ENCODE measurements at regions of chr6 and their contacts with region 1.

Region 1: GRCh38 chr6:52724406-52725121 is 38.7 kb downstream of the GSTA2 start:
- DNase-seq: peak; percentile 79
- ATAC-seq: peak; percentile 89
- H3K4me3 ChIP-seq: 0 out of 6 replicates have a peak overlapping the region, but pooled peaks of 1 of the 3 experiments have one; percentile 49
- H3K27ac ChIP-seq: peak overlapping the region; percentile 94
- H3K4me1 ChIP-seq: peaks cover 62% of the 10 kb centered on the region
- H3K27me3 ChIP-seq: no peaks in the 10 kb centered on the region
- CTCF ChIP-seq: peak; percentile 95
- EP300 ChIP-seq: no peak
- POLR2A ChIP-seq: no peak
- RAD21 ChIP-seq: peak; percentile 97

Region 2: GRCh38 chr6:52670502-52671409 is 53.8 kb before region 1 on chr6 and contains the start of gene TMEM14A:
- CTCF ChIA-PET with region 1: no interaction called
- POLR2A ChIA-PET with region 1: no interaction called
- in situ Hi-C with region 1: no loop called
- intact Hi-C with region 1: loop called (anchors 2 kb)
- DNase-seq: peak; percentile 95
- ATAC-seq: peak; percentile 98
- H3K4me3 ChIP-seq: peak within 1 kb of the TSS; percentile 60 to 80 (median 69)
- H3K27ac ChIP-seq: peak within 1 kb of the TSS; percentile 60
- H3K4me1 ChIP-seq: peaks cover 55% of the 10 kb centered on the region
- H3K27me3 ChIP-seq: no peaks in the 10 kb centered on the region; a peak in 1 of 5 replicates
- CTCF ChIP-seq: peak; percentile 50
- EP300 ChIP-seq: peak in 1 of 2 experiments; percentile 59; a peak in 2 of 4 replicates
- POLR2A ChIP-seq: peak; percentile 93 to 96
- RAD21 ChIP-seq: peak; percentile 74
- total RNA-seq, gene TMEM14A: 73.7 and 78.0 TPM in 2 replicates

Region 3: GRCh38 chr6:52745764-52746201 is 21.2 kb after region 1 on chr6:
- CTCF ChIA-PET with region 1: no interaction called
- POLR2A ChIA-PET with region 1: interaction called, 5 read pairs
- in situ Hi-C with region 1: no loop called
- intact Hi-C with region 1: loop called (anchors 1 kb)
- DNase-seq: peak; percentile 78
- ATAC-seq: peak; percentile 69
- H3K4me3 ChIP-seq: no peak overlapping the region
- H3K27ac ChIP-seq: peak overlapping the region; percentile 68
- H3K4me1 ChIP-seq: peaks cover 64% of the 10 kb centered on the region
- H3K27me3 ChIP-seq: no peaks in the 10 kb centered on the region
- CTCF ChIP-seq: no peak
- EP300 ChIP-seq: peak; percentile 10 to 87; a peak in 3 of 4 replicates
- POLR2A ChIP-seq: no peak
- RAD21 ChIP-seq: no peak

Region 4: DNA sequence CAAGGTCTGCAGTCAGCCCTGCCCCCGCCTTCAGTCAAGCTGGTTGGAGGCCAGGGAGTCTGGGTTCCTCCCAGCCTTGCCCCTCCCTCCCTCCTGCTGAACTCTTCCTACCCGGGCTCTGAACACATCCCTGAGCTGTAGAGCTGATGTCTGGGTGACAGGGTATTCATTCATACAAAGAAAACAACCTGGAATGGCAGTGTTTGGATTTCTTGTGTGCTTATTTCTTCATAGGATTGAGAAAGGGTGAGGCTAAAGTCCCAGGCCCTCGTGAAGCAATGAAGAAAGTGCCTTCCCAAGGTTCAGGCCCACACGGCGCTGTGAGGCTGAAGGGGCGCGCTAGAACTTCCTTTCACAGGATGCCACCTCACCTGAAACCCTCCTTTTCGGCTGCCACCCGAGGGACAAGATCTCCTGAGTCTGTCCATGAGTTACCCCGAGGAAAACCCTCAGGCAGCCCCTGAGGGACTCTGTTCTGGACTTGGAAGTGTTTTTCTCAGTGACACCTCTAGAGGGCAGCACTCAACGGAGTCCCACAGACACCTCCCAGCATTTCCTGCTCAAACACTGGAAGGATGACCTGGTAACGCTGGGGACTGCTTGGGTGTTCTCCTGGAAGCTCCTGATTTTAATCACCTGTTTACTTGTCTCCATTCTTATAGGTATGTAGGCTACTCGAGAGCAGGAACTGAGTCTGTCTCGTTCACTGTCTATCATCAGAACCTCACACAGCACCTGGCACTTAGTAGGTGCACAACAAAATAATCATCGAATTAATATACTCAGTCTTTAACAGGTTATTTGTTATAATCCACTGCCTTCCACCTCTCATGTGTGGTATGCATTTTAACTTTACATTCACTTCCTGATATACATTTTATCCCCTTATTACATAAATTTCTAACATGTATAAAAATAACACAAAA is 90.9 kb after region 1 on chr6:
- CTCF ChIA-PET with region 1: interaction called, 22 read pairs
- POLR2A ChIA-PET with region 1: interaction called, 16 read pairs
- in situ Hi-C with region 1: no loop called
- intact Hi-C with region 1: loop called (anchors 1 kb)
- DNase-seq: peak; percentile 91
- ATAC-seq: peak; percentile 92
- H3K4me3 ChIP-seq: peak overlapping the region; percentile 34 to 69 (median 41); a peak in 4 of 6 replicates
- H3K27ac ChIP-seq: peak overlapping the region; percentile 89
- H3K4me1 ChIP-seq: peaks cover 34% of the 10 kb centered on the region
- H3K27me3 ChIP-seq: no peaks in the 10 kb centered on the region
- CTCF ChIP-seq: peak; percentile 88
- EP300 ChIP-seq: peak in 1 of 2 experiments; percentile 90; a peak in 3 of 4 replicates
- POLR2A ChIP-seq: peak in 1 of 2 experiments; percentile 69; a peak in 2 of 4 replicates
- RAD21 ChIP-seq: peak; percentile 78

Region 5: GRCh38 chr6:52910091-52910490 is 185.5 kb after region 1 on chr6:
- CTCF ChIA-PET with region 1: no interaction called
- POLR2A ChIA-PET with region 1: no interaction called
- in situ Hi-C with region 1: no loop called
- intact Hi-C with region 1: loop called (anchors 10 kb)
- DNase-seq: no peak
- ATAC-seq: no peak
- H3K4me3 ChIP-seq: no peak overlapping the region
- H3K27ac ChIP-seq: no peak overlapping the region
- H3K4me1 ChIP-seq: peaks cover 6% of the 10 kb centered on the region; the same call in 1 of the 2 replicates
- H3K27me3 ChIP-seq: peaks cover 0 to 6% of the 10 kb centered on the region in 2 experiments; a peak in 3 of 5 replicates
- CTCF ChIP-seq: no peak
- EP300 ChIP-seq: no peak
- POLR2A ChIP-seq: no peak
- RAD21 ChIP-seq: no peak

Region 6: DNA sequence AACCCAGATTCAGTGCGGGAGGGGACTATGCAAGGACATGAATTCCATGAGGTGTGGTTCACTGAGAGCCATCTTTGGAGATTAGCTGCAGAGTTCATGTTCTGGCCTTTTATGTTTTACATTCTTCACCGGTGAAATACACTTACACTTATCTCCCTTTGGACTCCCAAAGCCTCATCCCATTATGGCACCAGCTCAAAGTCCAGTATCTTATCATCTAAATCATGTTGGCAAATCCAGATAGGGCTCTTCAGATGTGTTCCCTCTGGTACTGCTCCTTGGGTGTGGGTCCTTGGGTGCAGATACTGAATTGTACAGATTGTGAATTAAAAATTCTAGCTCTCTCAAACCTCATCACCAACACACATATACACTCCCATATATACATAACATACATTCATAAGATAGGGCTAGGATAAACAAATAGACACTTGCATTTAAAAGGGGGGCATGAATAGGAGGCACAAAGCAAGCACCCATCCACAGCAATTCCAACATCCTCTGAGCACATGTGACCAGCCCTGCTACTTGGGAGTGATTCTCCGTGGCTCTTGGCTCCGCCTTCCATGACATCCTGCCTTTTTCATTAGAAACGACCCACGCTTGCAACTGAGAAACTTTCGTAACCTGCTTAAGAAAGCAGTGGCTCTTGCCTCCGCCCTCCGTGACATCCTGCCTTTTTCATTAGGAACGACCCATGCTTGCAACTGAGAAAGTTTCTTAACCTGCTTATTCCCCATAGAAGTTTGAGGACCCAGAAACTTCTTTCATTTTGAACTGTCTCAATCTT is 1016.7 kb after region 1 on chr6:
- CTCF ChIA-PET with region 1: no interaction called
- POLR2A ChIA-PET with region 1: no interaction called
- in situ Hi-C with region 1: no loop called
- intact Hi-C with region 1: no loop called
- DNase-seq: peak; percentile 80
- ATAC-seq: peak; percentile 80
- H3K4me3 ChIP-seq: no peak overlapping the region
- H3K27ac ChIP-seq: no peak overlapping the region
- H3K4me1 ChIP-seq: peaks cover 29% of the 10 kb centered on the region
- H3K27me3 ChIP-seq: no peaks in the 10 kb centered on the region
- CTCF ChIP-seq: no peak
- EP300 ChIP-seq: no peak
- POLR2A ChIP-seq: no peak
- RAD21 ChIP-seq: no peak

Measured in HepG2 (cell line).